ENCODE measurements at regions of chr11 and their contacts with region 1.

Region 1: GRCh38 chr11:10735481-10736475 is 15.3 kb upstream of the CTR9 start:
- DNase-seq: peak; percentile 79 to 92 (median 88)
- H3K4me3 ChIP-seq: peak overlapping the region in 1 of 3 experiments; percentile 61
- H3K4me3 Mint-ChIP-seq: peak overlapping the region; percentile 56 to 74
- H3K27ac ChIP-seq: no peak overlapping the region
- H3K27ac Mint-ChIP-seq: peak overlapping the region in 6 of 7 donors; percentile 17 to 80 (median 60)
- H3K4me1 ChIP-seq: peaks cover 6 to 10% of the 10 kb centered on the region in 2 donors
- H3K4me1 Mint-ChIP-seq: peaks cover 15% of the 10 kb centered on the region
- H3K27me3 ChIP-seq: no peaks in the 10 kb centered on the region
- H3K27me3 Mint-ChIP-seq: peaks cover 8 to 15% (median 13%) of the 10 kb centered on the region in 3 donors
- CTCF ChIP-seq: peak; percentile 98

Region 2: DNA sequence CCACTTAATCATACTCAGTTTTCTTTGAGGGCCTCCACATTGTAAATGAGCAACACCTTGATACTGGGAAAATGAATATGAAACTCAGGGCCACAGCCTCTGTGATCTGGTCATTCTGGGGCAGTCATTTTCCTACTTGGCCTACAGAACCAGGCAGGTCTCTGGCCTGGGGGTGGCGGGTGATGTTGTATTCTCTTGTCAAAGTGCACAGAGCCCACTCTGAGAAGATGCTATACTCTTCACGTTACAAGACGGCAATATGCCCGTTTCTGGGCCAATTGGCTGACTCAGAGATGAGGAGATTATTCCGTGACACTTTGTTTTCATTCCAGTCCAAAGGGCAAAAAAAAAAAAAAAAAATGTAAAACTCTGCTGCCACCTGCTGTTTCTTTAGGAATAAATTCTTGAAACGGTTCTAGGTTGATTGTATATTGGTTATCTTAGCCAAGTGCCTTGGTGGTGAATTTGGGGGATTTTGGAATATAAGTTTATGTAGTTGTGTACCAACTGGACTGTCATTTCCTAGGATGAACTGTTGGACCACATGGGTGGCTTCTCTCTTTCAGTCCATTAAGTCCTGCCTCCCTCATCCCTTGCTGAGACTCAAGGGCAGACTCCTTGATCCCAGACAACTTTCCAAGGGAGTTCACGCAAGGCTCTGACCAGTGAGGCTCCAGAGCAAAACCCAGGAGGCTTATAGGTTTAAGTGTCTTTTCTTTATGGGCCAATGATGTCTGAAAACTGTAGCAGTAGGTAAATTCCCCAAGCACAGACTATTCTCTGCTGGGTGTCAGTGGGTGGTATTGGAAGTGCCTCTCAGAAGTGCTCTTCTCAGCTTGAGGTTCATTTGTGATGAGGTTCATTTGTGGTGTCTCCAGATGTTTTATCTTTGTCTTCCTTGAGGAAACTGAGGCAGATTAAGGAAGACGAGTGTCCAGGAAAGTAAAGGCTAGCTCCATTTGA is 412.7 kb before region 1 on chr11:
- intact Hi-C with region 1: loop called in 1 of 2 experiments (anchors 10 kb)
- DNase-seq: peak; percentile 49 to 70 (median 68)
- H3K4me3 ChIP-seq: no peak overlapping the region
- H3K4me3 Mint-ChIP-seq: no peak overlapping the region
- H3K27ac ChIP-seq: no peak overlapping the region
- H3K27ac Mint-ChIP-seq: peak overlapping the region in 4 of 7 donors; percentile 58 to 75 (median 67)
- H3K4me1 ChIP-seq: peaks cover 20 to 23% of the 10 kb centered on the region in 2 donors
- H3K4me1 Mint-ChIP-seq: peaks cover 27% of the 10 kb centered on the region
- H3K27me3 ChIP-seq: no peaks in the 10 kb centered on the region
- H3K27me3 Mint-ChIP-seq: peaks cover 0 to 7% (median 0%) of the 10 kb centered on the region in 3 donors
- CTCF ChIP-seq: peak; percentile 69

Region 3: GRCh38 chr11:10405855-10406592 is 329.8 kb before region 1 on chr11:
- intact Hi-C with region 1: loop called (anchors 5 kb)
- DNase-seq: peak; percentile 63 to 87 (median 83)
- H3K4me3 ChIP-seq: no peak overlapping the region
- H3K4me3 Mint-ChIP-seq: no peak overlapping the region
- H3K27ac ChIP-seq: no peak overlapping the region
- H3K27ac Mint-ChIP-seq: peak overlapping the region in 1 of 7 donors; percentile 75
- H3K4me1 ChIP-seq: peaks cover 40 to 45% of the 10 kb centered on the region in 2 donors
- H3K4me1 Mint-ChIP-seq: peaks cover 47% of the 10 kb centered on the region
- H3K27me3 ChIP-seq: no peaks in the 10 kb centered on the region
- H3K27me3 Mint-ChIP-seq: peaks cover 0 to 5% (median 3%) of the 10 kb centered on the region in 3 donors
- CTCF ChIP-seq: peak; percentile 84

Region 4: GRCh38 chr11:10474551-10474950 is 261.2 kb before region 1 on chr11:
- intact Hi-C with region 1: no loop called
- DNase-seq: no peak
- H3K4me3 ChIP-seq: no peak overlapping the region
- H3K4me3 Mint-ChIP-seq: no peak overlapping the region
- H3K27ac ChIP-seq: no peak overlapping the region
- H3K27ac Mint-ChIP-seq: peak overlapping the region in 2 of 7 donors; percentile 21 to 72
- H3K4me1 ChIP-seq: peaks cover 6 to 11% of the 10 kb centered on the region in 2 donors
- H3K4me1 Mint-ChIP-seq: peaks cover 14% of the 10 kb centered on the region
- H3K27me3 ChIP-seq: no peaks in the 10 kb centered on the region
- H3K27me3 Mint-ChIP-seq: no peaks in the 10 kb centered on the region
- CTCF ChIP-seq: no peak

Region 5: GRCh38 chr11:10502770-10503169 is 233.0 kb before region 1 on chr11:
- intact Hi-C with region 1: loop called in 1 of 2 experiments (anchors 10 kb)
- DNase-seq: peak; percentile 78 to 86 (median 82)
- H3K4me3 ChIP-seq: peak overlapping the region in 1 of 3 experiments; percentile 50
- H3K4me3 Mint-ChIP-seq: peak overlapping the region in 1 of 2 donors; percentile 76
- H3K27ac ChIP-seq: peak overlapping the region; percentile 84 to 97
- H3K27ac Mint-ChIP-seq: peak overlapping the region; percentile 96 to 98 (median 97)
- H3K4me1 ChIP-seq: peaks cover 59 to 66% of the 10 kb centered on the region in 2 donors
- H3K4me1 Mint-ChIP-seq: peaks cover 50% of the 10 kb centered on the region
- H3K27me3 ChIP-seq: no peaks in the 10 kb centered on the region
- H3K27me3 Mint-ChIP-seq: peaks cover 0 to 3% (median 0%) of the 10 kb centered on the region in 3 donors
- CTCF ChIP-seq: no peak

Region 6: GRCh38 chr11:10514210-10514609 is 221.6 kb before region 1 on chr11:
- intact Hi-C with region 1: loop called (anchors 10 kb)
- DNase-seq: peak in 1 of 3 donors; percentile 40
- H3K4me3 ChIP-seq: no peak overlapping the region
- H3K4me3 Mint-ChIP-seq: no peak overlapping the region
- H3K27ac ChIP-seq: no peak overlapping the region
- H3K27ac Mint-ChIP-seq: no peak overlapping the region
- H3K4me1 ChIP-seq: no peaks in the 10 kb centered on the region
- H3K4me1 Mint-ChIP-seq: peaks cover 5% of the 10 kb centered on the region
- H3K27me3 ChIP-seq: no peaks in the 10 kb centered on the region
- H3K27me3 Mint-ChIP-seq: no peaks in the 10 kb centered on the region
- CTCF ChIP-seq: peak; percentile 38

Region 7: GRCh38 chr11:10540923-10541560 is 194.7 kb before region 1 on chr11 and contains the start of gene RNF141:
- intact Hi-C with region 1: loop called (anchors 5 to 10 kb)
- DNase-seq: peak; percentile 89 to 92 (median 91)
- H3K4me3 ChIP-seq: peak within 1 kb of the TSS; percentile 74 to 81 (median 78)
- H3K4me3 Mint-ChIP-seq: peak within 1 kb of the TSS; percentile 90 to 94
- H3K27ac ChIP-seq: peak within 1 kb of the TSS; percentile 72 to 78
- H3K27ac Mint-ChIP-seq: peak within 1 kb of the TSS; percentile 88 to 93 (median 91)
- H3K4me1 ChIP-seq: peaks cover 27 to 36% of the 10 kb centered on the region in 2 donors
- H3K4me1 Mint-ChIP-seq: peaks cover 34% of the 10 kb centered on the region
- H3K27me3 ChIP-seq: no peaks in the 10 kb centered on the region
- H3K27me3 Mint-ChIP-seq: no peaks in the 10 kb centered on the region
- CTCF ChIP-seq: peak; percentile 90
- polyA plus RNA-seq, gene RNF141: 19.7 to 114 (median 98.3) TPM

Region 8: GRCh38 chr11:10653926-10654810 is 81.6 kb before region 1 on chr11:
- intact Hi-C with region 1: loop called in 1 of 2 experiments (anchors 5 kb)
- DNase-seq: peak; percentile 48 to 78 (median 77)
- H3K4me3 ChIP-seq: no peak overlapping the region
- H3K4me3 Mint-ChIP-seq: no peak overlapping the region
- H3K27ac ChIP-seq: peak overlapping the region in 1 of 2 donors; percentile 52
- H3K27ac Mint-ChIP-seq: peak overlapping the region in 6 of 7 donors; percentile 63 to 86 (median 74)
- H3K4me1 ChIP-seq: peaks cover 63 to 68% of the 10 kb centered on the region in 2 donors
- H3K4me1 Mint-ChIP-seq: peaks cover 67% of the 10 kb centered on the region
- H3K27me3 ChIP-seq: no peaks in the 10 kb centered on the region
- H3K27me3 Mint-ChIP-seq: peaks cover 1 to 5% (median 2%) of the 10 kb centered on the region in 3 donors
- CTCF ChIP-seq: peak; percentile 86

Measured in CD14-positive monocyte (primary cell).